ENCODE measurements at regions of chr4 and their contacts with region 1.

Region 1: GRCh38 chr4:84254537-84254936 is 244.6 kb downstream of the NKX6-1 start:
- DNase-seq: no peak
- H3K4me3 ChIP-seq: no peak overlapping the region
- H3K27ac ChIP-seq: no peak overlapping the region
- H3K4me1 ChIP-seq: no peaks in the 10 kb centered on the region
- H3K27me3 ChIP-seq: no peaks in the 10 kb centered on the region
- CTCF ChIP-seq: no peak
- POLR2A ChIP-seq: no peak

Region 2: DNA sequence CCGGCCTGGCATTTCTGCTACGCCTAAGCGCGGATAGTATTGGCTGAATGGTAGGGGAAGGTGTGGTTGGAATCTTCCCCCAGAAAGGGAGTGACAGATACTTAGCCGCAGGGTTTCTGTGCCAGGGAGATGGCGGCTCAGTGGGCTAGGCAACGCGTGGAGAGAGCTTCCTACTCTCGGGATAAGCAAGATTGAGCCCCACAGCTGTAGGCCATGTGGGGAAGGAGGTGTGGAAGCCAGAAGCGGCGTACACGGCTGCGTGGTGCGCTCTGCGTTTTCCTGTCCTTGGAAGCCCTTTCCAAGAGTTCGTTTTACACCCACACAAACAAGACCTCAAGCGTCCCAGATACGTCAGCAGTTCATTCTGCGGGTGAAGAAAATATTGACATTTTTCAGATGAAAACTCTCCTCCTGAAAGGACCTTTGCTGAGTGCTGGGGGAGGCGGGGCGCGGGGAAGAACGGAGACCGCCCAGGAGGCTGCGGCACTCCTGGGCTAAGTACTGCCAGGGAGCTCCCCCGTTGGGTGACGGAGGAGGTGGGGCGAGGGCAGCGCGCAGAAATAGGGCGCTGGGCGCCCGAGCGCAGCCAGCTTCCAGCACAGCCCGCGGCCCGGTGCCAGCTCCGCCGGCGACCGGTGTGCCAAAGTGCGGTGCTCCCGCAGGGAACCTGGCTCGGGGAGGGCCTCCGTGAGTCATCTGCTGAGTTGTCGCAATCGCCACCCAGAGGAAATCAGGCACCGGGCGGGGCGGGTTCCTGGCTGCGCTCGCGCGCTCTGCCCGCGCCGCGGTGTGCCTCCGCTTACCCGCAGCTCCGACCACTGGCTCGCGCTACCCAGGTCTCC is 718.8 kb before region 1 on chr4 and contains the start of gene GPAT3:
- intact Hi-C with region 1: loop called (anchors 5 kb)
- DNase-seq: peak; percentile 73 to 75
- H3K4me3 ChIP-seq: peak within 1 kb of the TSS; percentile 67 to 79 (median 72)
- H3K27ac ChIP-seq: peak within 1 kb of the TSS; percentile 77 to 83
- H3K4me1 ChIP-seq: no peaks in the 10 kb centered on the region
- H3K27me3 ChIP-seq: no peaks in the 10 kb centered on the region
- CTCF ChIP-seq: no peak
- POLR2A ChIP-seq: no peak
- total RNA-seq, gene GPAT3: 5.1 to 7.6 (median 5.6) TPM

Measured in breast epithelium (tissue), 4 donors.